Panc1 (cell line): ENCODE measurements at regions of chr6 and their contacts with region 1.

Region 1: GRCh38 chr6:159676890-159677505 is 16.0 kb downstream of the SOD2 start:
- DNase-seq: no peak
- ATAC-seq: no peak
- H3K4me3 ChIP-seq: no peak overlapping the region
- H3K27ac ChIP-seq: no peak overlapping the region
- H3K4me1 ChIP-seq: no peaks in the 10 kb centered on the region
- H3K27me3 ChIP-seq: no peaks in the 10 kb centered on the region
- CTCF ChIP-seq: no peak

Region 2: GRCh38 chr6:159217595-159218275 is 459.3 kb before region 1 on chr6:
- CTCF ChIA-PET with region 1: no interaction called
- POLR2A ChIA-PET with region 1: interaction called, 13 read pairs
- in situ Hi-C with region 1: no loop called
- intact Hi-C with region 1: no loop called
- DNase-seq: no peak
- ATAC-seq: peak; percentile 94
- H3K4me3 ChIP-seq: no peak overlapping the region
- H3K27ac ChIP-seq: no peak overlapping the region
- H3K4me1 ChIP-seq: no peaks in the 10 kb centered on the region
- H3K27me3 ChIP-seq: peaks cover 14% of the 10 kb centered on the region; the same call in 1 of the 2 replicates
- CTCF ChIP-seq: peak; percentile 78

Region 3: DNA sequence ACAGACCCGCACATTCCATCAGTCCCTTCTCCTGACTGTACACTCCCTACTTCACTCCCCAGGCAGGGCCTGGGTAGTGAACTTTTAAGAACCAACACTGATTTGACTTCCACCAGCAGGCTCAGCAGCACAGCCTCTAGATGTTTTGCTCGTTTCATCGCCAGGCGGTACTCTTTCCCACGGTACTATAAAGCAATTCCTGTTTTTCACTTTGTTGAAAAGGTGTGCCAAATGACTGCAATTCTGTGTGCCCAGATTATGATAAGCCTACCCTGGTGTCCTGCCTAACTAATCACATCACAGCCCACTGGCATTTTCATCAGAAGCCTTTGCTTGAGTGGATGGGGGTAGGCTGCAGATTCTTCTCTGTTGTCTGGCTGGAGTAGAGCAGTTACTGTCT is 37.4 kb after region 1 on chr6:
- CTCF ChIA-PET with region 1: no interaction called
- POLR2A ChIA-PET with region 1: no interaction called
- in situ Hi-C with region 1: no loop called
- intact Hi-C with region 1: no loop called
- DNase-seq: no peak
- ATAC-seq: no peak
- H3K4me3 ChIP-seq: no peak overlapping the region
- H3K27ac ChIP-seq: no peak overlapping the region
- H3K4me1 ChIP-seq: 0 out of 2 replicates have a peak, but pooled peaks cover 3% of the 10 kb centered on the region
- H3K27me3 ChIP-seq: no peaks in the 10 kb centered on the region
- CTCF ChIP-seq: no peak

Region 4: GRCh38 chr6:159880412-159880975 is 203.5 kb after region 1 on chr6:
- CTCF ChIA-PET with region 1: no interaction called
- POLR2A ChIA-PET with region 1: no interaction called
- in situ Hi-C with region 1: no loop called
- intact Hi-C with region 1: no loop called
- DNase-seq: no peak
- ATAC-seq: no peak
- H3K4me3 ChIP-seq: no peak overlapping the region
- H3K27ac ChIP-seq: no peak overlapping the region
- H3K4me1 ChIP-seq: no peaks in the 10 kb centered on the region
- H3K27me3 ChIP-seq: peaks cover 1% of the 10 kb centered on the region; the same call in 1 of the 2 replicates
- CTCF ChIP-seq: no peak